Activated CD4-positive, alpha-beta T cell treated with anti-CD3 and anti-CD28 coated beads for 36 hours (primary cell): ENCODE measurements at regions of chr17 and their contacts with region 1.

Region 1: GRCh38 chr17:50626037-50626574 is 8.6 kb upstream of the ABCC3 start:
- DNase-seq: peak; percentile 83
- ATAC-seq: peak; percentile 88
- H3K4me3 Mint-ChIP-seq: no peak overlapping the region
- H3K27ac Mint-ChIP-seq: no peak overlapping the region
- H3K4me1 Mint-ChIP-seq: no peaks in the 10 kb centered on the region
- H3K27me3 Mint-ChIP-seq: peaks cover 21% of the 10 kb centered on the region

Region 2: DNA sequence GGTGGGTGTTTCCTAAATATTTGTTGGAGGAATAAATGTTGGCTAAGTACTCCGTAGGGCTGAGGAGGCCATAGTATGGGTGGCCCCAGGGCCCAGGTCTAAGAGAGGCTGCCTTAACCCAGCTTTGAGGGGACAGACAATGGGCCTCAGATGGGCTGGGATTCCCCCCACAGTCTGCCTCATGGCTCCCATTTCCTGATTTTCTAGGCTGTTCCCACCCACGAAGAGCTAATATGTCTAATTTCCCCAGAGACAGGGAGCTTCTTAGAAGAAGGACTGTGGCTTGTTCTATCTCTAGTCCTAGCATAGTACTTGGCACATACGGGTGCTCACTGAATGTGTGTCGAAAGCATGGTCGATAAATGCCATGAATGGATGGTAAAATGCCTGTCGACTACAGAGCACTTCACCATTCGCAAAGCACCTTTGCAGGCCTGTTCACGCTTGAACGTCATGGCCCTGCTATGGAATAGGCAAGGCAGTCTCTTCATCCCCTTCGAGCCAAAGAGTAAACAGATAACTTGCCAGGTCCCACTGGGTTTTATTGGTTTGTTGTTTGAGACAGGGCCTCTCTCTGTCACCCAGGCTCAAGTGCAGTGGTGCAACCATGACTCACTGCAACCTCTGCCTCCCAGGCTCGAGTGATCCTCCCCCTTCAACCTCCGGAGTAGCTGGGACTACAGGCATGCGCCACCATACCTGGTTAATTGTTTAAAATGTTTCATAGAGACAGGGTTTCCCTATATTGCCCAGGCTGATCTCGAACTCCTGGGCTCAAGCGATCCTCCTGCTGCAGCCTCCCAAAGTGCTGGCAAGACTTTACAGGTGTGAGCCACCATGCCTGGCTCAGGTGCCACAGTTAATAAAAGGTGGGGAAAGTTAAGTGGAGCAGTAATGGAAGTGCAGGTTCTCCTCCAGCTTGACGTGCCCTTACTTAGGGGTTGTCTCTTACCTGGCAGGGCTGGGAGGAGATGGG is 167.1 kb before region 1 on chr17:
- CTCF ChIA-PET with region 1: no interaction called
- POLR2A ChIA-PET with region 1: no interaction called
- intact Hi-C with region 1: no loop called
- DNase-seq: no peak
- ATAC-seq: no peak
- H3K4me3 Mint-ChIP-seq: no peak overlapping the region
- H3K27ac Mint-ChIP-seq: no peak overlapping the region
- H3K4me1 Mint-ChIP-seq: no peaks in the 10 kb centered on the region
- H3K27me3 Mint-ChIP-seq: no peaks in the 10 kb centered on the region

Region 3: DNA sequence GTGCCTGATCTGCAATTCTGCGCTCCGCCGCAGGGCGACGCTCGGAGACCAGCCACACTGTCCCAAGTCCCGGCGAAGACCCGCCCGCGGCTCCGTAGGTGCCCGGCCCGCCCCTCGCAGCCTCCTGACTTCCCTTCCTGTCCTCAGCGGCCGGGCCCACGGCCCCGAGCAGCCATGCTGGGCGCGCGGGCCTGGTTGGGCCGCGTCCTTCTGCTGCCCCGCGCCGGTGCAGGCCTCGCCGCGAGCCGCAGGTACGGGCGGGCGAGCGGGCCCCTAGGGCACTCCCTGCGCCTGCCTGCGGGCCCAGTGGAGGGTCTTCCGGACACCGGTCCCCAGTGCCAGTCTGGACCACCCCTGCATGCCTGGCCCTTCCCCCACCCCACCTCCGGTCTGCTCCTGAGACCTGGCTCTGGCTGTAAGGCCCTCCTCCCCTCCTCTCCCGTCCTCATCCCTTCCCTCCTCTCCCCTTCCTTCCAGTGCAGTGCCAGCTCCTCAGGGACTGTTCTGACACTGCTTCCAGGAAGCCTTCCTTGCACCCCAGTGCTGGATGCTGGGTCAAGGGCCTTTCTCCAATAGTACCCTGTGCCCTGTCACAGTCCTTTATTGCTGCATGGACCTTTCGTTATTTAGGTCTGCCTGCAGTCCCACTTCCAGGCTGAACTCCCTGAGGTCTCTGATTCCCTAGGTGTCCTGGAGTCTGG is 78.9 kb before region 1 on chr17 and contains the start of gene SPATA20:
- CTCF ChIA-PET with region 1: interaction called, 22 read pairs
- POLR2A ChIA-PET with region 1: no interaction called
- intact Hi-C with region 1: loop called (anchors 1 kb)
- DNase-seq: peak; percentile 93
- ATAC-seq: peak; percentile 88
- H3K4me3 Mint-ChIP-seq: peak within 1 kb of the TSS; percentile 63
- H3K27ac Mint-ChIP-seq: no peak within 1 kb of the TSS
- H3K4me1 Mint-ChIP-seq: peaks cover 8% of the 10 kb centered on the region
- H3K27me3 Mint-ChIP-seq: peaks cover 7% of the 10 kb centered on the region
- total RNA-seq, gene SPATA20: 9.0 to 10.7 TPM

Region 4: GRCh38 chr17:50638851-50639767 is 13.0 kb after region 1 on chr17:
- CTCF ChIA-PET with region 1: interaction called, 31 read pairs
- POLR2A ChIA-PET with region 1: no interaction called
- intact Hi-C with region 1: no loop called
- DNase-seq: no peak
- ATAC-seq: no peak
- H3K4me3 Mint-ChIP-seq: no peak overlapping the region
- H3K27ac Mint-ChIP-seq: no peak overlapping the region
- H3K4me1 Mint-ChIP-seq: no peaks in the 10 kb centered on the region
- H3K27me3 Mint-ChIP-seq: peaks cover 27% of the 10 kb centered on the region

Region 5: DNA sequence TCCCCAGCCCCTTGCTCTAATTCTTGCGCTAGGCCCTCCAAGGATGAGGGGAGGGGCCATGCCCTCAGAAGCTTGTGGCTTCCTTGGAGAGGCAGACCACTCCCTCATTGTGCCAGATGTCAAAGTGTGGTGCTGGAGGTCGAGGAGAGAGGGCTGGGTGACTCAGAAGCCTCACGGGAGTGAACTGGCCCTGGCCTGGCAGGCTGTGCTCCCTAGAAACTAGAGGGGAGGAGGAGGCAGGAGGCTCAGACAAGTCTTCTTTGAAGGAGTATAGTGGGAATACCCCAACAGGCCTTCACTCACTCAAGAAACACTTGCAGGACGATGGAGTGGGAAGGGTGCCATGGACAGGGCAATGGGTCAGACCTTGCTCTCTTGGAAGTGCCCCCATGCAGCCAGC is 63.1 kb after region 1 on chr17:
- CTCF ChIA-PET with region 1: interaction called, 11 read pairs
- POLR2A ChIA-PET with region 1: interaction called, 3 read pairs
- intact Hi-C with region 1: loop called in 1 of 2 experiments (anchors 2 kb)
- DNase-seq: no peak
- ATAC-seq: no peak
- H3K4me3 Mint-ChIP-seq: no peak overlapping the region
- H3K27ac Mint-ChIP-seq: no peak overlapping the region
- H3K4me1 Mint-ChIP-seq: no peaks in the 10 kb centered on the region
- H3K27me3 Mint-ChIP-seq: no peaks in the 10 kb centered on the region